ENCODE measurements at regions of chr18 and their contacts with region 1.

Region 1: GRCh38 chr18:31206787-31207381 is 44.2 kb upstream of the DSC1 start:
- DNase-seq: peak; percentile 86
- ATAC-seq: peak; percentile 90
- H3K4me3 ChIP-seq: peak overlapping the region; percentile 55 to 67 (median 59)
- H3K27ac ChIP-seq: no peak overlapping the region
- H3K4me1 ChIP-seq: peaks cover 65% of the 10 kb centered on the region
- H3K27me3 ChIP-seq: no peaks in the 10 kb centered on the region; a peak in 1 of 5 replicates
- CTCF ChIP-seq: peak; percentile 48
- EP300 ChIP-seq: 0 out of 4 replicates have a peak, but pooled peaks of 1 of the 2 experiments have one; percentile 8
- POLR2A ChIP-seq: peak; percentile 45 to 46; a peak in 2 of 4 replicates
- RAD21 ChIP-seq: no peak

Region 2: DNA sequence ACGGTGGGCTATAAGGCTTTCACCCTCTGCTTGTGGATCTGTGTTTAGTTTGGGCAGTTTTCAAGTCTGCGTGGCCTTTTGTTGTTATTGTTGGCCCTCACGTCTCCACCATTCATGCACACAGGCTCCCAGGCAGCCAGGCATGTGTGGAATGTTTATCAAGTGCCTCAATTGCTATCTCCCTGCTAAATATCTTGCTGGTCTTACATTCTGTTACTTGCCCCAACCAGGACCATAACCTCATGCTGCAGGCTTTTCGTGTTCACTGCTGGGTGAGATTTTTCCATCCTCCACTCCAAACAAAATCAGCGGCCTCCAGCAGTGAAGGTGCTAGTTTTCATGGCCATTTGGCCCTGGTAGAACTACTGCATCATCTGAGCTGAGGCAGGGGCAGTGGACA is 18.8 kb after region 1 on chr18:
- CTCF ChIA-PET with region 1: no interaction called
- POLR2A ChIA-PET with region 1: interaction called, 4 read pairs
- in situ Hi-C with region 1: no loop called
- intact Hi-C with region 1: loop called (anchors 2 kb)
- DNase-seq: peak; percentile 89
- ATAC-seq: peak; percentile 96
- H3K4me3 ChIP-seq: peak overlapping the region in 1 of 3 experiments; percentile 25; a peak in 1 of 6 replicates
- H3K27ac ChIP-seq: peak overlapping the region; percentile 40
- H3K4me1 ChIP-seq: peaks cover 52% of the 10 kb centered on the region
- H3K27me3 ChIP-seq: no peaks in the 10 kb centered on the region
- CTCF ChIP-seq: no peak
- EP300 ChIP-seq: no peak; a peak in 2 of 4 replicates
- POLR2A ChIP-seq: no peak
- RAD21 ChIP-seq: no peak

Region 3: GRCh38 chr18:31241900-31242409 is 35.1 kb after region 1 on chr18:
- CTCF ChIA-PET with region 1: no interaction called
- POLR2A ChIA-PET with region 1: interaction called, 32 read pairs
- in situ Hi-C with region 1: no loop called
- intact Hi-C with region 1: no loop called
- DNase-seq: peak; percentile 98
- ATAC-seq: peak; percentile 86
- H3K4me3 ChIP-seq: no peak overlapping the region
- H3K27ac ChIP-seq: peak overlapping the region; percentile 94
- H3K4me1 ChIP-seq: peaks cover 61% of the 10 kb centered on the region
- H3K27me3 ChIP-seq: no peaks in the 10 kb centered on the region
- CTCF ChIP-seq: peak; percentile 82
- EP300 ChIP-seq: peak; percentile 29 to 94; a peak in 2 of 4 replicates
- POLR2A ChIP-seq: no peak
- RAD21 ChIP-seq: peak; percentile 80

Region 4: DNA sequence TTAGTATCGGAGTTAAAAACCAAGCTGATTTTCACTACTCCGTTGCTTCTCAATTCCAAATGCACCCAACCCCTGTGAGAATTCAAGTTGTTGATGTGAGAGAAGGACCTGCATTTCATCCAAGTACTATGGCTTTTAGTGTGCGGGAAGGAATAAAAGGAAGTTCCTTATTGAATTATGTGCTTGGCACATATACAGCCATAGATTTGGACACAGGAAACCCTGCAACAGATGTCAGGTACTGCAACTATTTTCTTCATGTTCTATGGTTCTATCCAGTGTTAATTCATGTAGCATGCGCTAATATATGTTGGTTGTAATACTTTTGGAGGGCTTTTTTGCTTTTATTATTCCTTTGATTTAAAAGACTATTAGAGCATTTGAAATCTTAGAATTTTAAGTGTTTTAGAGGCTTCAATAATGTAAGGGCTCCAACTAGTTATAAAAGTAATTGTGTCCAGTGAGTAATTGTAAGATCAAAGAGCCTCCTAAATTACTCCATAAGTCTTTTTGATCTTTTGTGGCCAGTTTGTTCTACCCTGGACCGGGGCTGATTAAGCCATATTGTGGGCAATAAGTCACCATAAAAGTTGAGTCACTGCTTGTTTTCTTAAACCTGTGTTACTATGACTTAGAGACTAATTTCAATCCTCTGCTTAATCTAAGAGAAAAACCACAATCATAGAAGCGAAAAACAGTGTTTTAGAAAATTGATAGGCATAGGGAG is 192.6 kb after region 1 on chr18:
- CTCF ChIA-PET with region 1: no interaction called
- POLR2A ChIA-PET with region 1: interaction called, 5 read pairs
- in situ Hi-C with region 1: no loop called
- intact Hi-C with region 1: loop called (anchors 5 kb)
- DNase-seq: peak; percentile 55
- ATAC-seq: no peak
- H3K4me3 ChIP-seq: no peak overlapping the region
- H3K27ac ChIP-seq: peak overlapping the region; percentile 93
- H3K4me1 ChIP-seq: peaks cover 92% of the 10 kb centered on the region
- H3K27me3 ChIP-seq: no peaks in the 10 kb centered on the region
- CTCF ChIP-seq: no peak
- EP300 ChIP-seq: peak in 1 of 2 experiments; percentile 79; a peak in 2 of 4 replicates
- POLR2A ChIP-seq: no peak
- RAD21 ChIP-seq: no peak